Activated naive CD4-positive, alpha-beta T cell treated with anti-CD3 and anti-CD28 coated beads for 36 hours (primary cell): ENCODE measurements at regions of chr17 and their contacts with region 1.

Region 1: GRCh38 chr17:63931099-63931561 is 1.0 kb downstream of the CD79B start:
- DNase-seq: peak; percentile 68
- H3K4me3 Mint-ChIP-seq: peak overlapping the region; percentile 93
- H3K27ac Mint-ChIP-seq: peak overlapping the region; percentile 76
- H3K4me1 Mint-ChIP-seq: peaks cover 17% of the 10 kb centered on the region
- H3K27me3 Mint-ChIP-seq: no peaks in the 10 kb centered on the region

Region 2: GRCh38 chr17:63649813-63650212 is 281.3 kb before region 1 on chr17:
- CTCF ChIA-PET with region 1: no interaction called
- intact Hi-C with region 1: no loop called
- DNase-seq: no peak
- H3K4me3 Mint-ChIP-seq: no peak overlapping the region
- H3K27ac Mint-ChIP-seq: no peak overlapping the region
- H3K4me1 Mint-ChIP-seq: peaks cover 12% of the 10 kb centered on the region
- H3K27me3 Mint-ChIP-seq: no peaks in the 10 kb centered on the region

Region 3: GRCh38 chr17:63848834-63849700 is 82.1 kb before region 1 on chr17:
- CTCF ChIA-PET with region 1: no interaction called
- intact Hi-C with region 1: no loop called
- DNase-seq: peak; percentile 98
- H3K4me3 Mint-ChIP-seq: peak overlapping the region; percentile 75
- H3K27ac Mint-ChIP-seq: peak overlapping the region; percentile 82
- H3K4me1 Mint-ChIP-seq: peaks cover 24% of the 10 kb centered on the region
- H3K27me3 Mint-ChIP-seq: no peaks in the 10 kb centered on the region

Region 4: GRCh38 chr17:63984651-63985386 is 53.7 kb after region 1 on chr17:
- CTCF ChIA-PET with region 1: interaction called, 4 read pairs
- intact Hi-C with region 1: loop called (anchors 2 kb)
- DNase-seq: peak; percentile 82
- H3K4me3 Mint-ChIP-seq: no peak overlapping the region
- H3K27ac Mint-ChIP-seq: peak overlapping the region; percentile 56
- H3K4me1 Mint-ChIP-seq: peaks cover 13% of the 10 kb centered on the region
- H3K27me3 Mint-ChIP-seq: no peaks in the 10 kb centered on the region